ENCODE measurements at regions of chr16 and their contacts with region 1.

Region 1: DNA sequence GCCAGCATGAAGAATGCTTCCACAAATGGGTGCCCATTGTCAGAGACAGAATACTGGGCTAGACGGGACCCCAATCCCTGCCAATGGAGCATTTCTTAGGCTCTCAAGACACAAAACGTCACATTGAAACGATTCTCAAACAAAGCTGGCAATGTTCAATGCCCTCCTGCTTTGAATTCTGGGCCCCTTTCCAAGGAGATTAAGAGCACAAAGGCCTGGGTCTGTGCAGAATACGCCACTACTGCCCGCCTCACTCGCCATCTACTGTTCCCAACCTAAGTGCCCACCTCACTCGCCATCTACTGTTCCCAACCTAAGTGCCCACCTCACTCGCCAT is 9.7 kb downstream of the CFAP20 start:
- DNase-seq: no peak
- ATAC-seq: no peak
- H3K4me3 Mint-ChIP-seq: no peak overlapping the region
- H3K27ac Mint-ChIP-seq: no peak overlapping the region
- H3K4me1 Mint-ChIP-seq: peaks cover 18% of the 10 kb centered on the region
- H3K27me3 Mint-ChIP-seq: no peaks in the 10 kb centered on the region
- CTCF ChIP-seq: no peak

Region 2: GRCh38 chr16:57906382-57907316 is 212.8 kb before region 1 on chr16:
- CTCF ChIA-PET with region 1: interaction called, 14 read pairs
- POLR2A ChIA-PET with region 1: no interaction called
- DNase-seq: peak; percentile 74
- ATAC-seq: peak; percentile 86
- H3K4me3 Mint-ChIP-seq: no peak overlapping the region
- H3K27ac Mint-ChIP-seq: no peak overlapping the region
- H3K4me1 Mint-ChIP-seq: peaks cover 10% of the 10 kb centered on the region
- H3K27me3 Mint-ChIP-seq: no peaks in the 10 kb centered on the region
- CTCF ChIP-seq: peak; percentile 40; the same call in 1 of the 2 replicates

Region 3: GRCh38 chr16:58018804-58019203 is 100.7 kb before region 1 on chr16:
- CTCF ChIA-PET with region 1: interaction called, 54 read pairs
- POLR2A ChIA-PET with region 1: no interaction called
- DNase-seq: peak; percentile 68
- ATAC-seq: peak; percentile 58
- H3K4me3 Mint-ChIP-seq: no peak overlapping the region
- H3K27ac Mint-ChIP-seq: no peak overlapping the region
- H3K4me1 Mint-ChIP-seq: peaks cover 17% of the 10 kb centered on the region
- H3K27me3 Mint-ChIP-seq: peaks cover under 1% of the 10 kb centered on the region
- CTCF ChIP-seq: no peak

Region 4: DNA sequence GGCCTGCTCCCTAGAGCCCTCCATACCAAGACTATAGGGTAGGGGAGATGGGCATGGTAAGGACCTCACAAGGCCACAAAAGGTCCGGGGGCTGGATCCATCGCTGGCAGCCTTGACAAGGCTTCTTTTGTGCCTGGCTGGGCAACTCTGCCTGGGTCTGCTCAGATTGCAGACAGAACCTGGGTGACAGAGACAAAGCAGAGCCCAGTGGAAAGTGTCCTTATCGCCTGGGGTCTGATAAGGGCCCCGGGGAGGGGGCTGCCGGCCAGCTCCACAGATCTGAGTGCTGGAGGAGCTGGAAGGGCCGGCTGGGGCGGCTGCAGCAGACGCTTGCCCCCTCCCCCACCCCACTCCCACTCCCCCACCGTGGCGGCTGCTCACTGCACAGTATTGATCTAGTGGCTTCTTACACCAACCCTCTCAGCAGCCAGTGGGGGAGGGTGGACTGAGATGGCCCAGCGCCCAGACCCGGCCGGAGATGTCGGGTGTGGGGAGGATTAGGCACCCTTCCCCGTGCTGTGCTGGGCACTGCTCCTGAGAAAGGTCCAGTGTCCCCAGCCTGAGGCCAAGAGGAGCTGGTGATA is 86.7 kb before region 1 on chr16:
- CTCF ChIA-PET with region 1: interaction called, 55 read pairs
- POLR2A ChIA-PET with region 1: interaction called, 14 read pairs
- DNase-seq: no peak
- ATAC-seq: peak; percentile 2; the same call in 1 of the 2 replicates
- H3K4me3 Mint-ChIP-seq: no peak overlapping the region
- H3K27ac Mint-ChIP-seq: no peak overlapping the region
- H3K4me1 Mint-ChIP-seq: peaks cover 37% of the 10 kb centered on the region
- H3K27me3 Mint-ChIP-seq: no peaks in the 10 kb centered on the region
- CTCF ChIP-seq: no peak

Region 5: GRCh38 chr16:58086426-58087208 is 32.9 kb before region 1 on chr16:
- CTCF ChIA-PET with region 1: interaction called, 10 read pairs
- POLR2A ChIA-PET with region 1: no interaction called
- DNase-seq: no peak
- ATAC-seq: peak; percentile 38
- H3K4me3 Mint-ChIP-seq: no peak overlapping the region
- H3K27ac Mint-ChIP-seq: no peak overlapping the region
- H3K4me1 Mint-ChIP-seq: peaks cover 19% of the 10 kb centered on the region
- H3K27me3 Mint-ChIP-seq: peaks cover 6% of the 10 kb centered on the region
- CTCF ChIP-seq: no peak

Region 6: GRCh38 chr16:58105631-58106030 is 13.8 kb before region 1 on chr16:
- CTCF ChIA-PET with region 1: interaction called, 40 read pairs
- POLR2A ChIA-PET with region 1: no interaction called
- DNase-seq: no peak
- ATAC-seq: no peak
- H3K4me3 Mint-ChIP-seq: no peak overlapping the region
- H3K27ac Mint-ChIP-seq: no peak overlapping the region
- H3K4me1 Mint-ChIP-seq: peaks cover 39% of the 10 kb centered on the region
- H3K27me3 Mint-ChIP-seq: no peaks in the 10 kb centered on the region
- CTCF ChIP-seq: no peak

Measured in WTC11 (cell line).